ENCODE measurements at regions of chr3 and their contacts with region 1.

Region 1: GRCh38 chr3:185558395-185558794 is 6.0 kb upstream of the LIPH start:
- DNase-seq: no peak
- H3K4me3 ChIP-seq: no peak overlapping the region
- H3K4me3 Mint-ChIP-seq: peak overlapping the region in 1 of 8 donors; percentile 3
- H3K27ac ChIP-seq: no peak overlapping the region
- H3K27ac Mint-ChIP-seq: no peak overlapping the region
- H3K4me1 ChIP-seq: no peaks in the 10 kb centered on the region
- H3K4me1 Mint-ChIP-seq: peaks cover 6 to 9% (median 8%) of the 10 kb centered on the region in 4 donors
- H3K27me3 ChIP-seq: no peaks in the 10 kb centered on the region
- H3K27me3 Mint-ChIP-seq: peaks cover 3 to 10% of the 10 kb centered on the region in 2 donors

Region 2: GRCh38 chr3:184977796-184978195 is 580.6 kb before region 1 on chr3:
- CTCF ChIA-PET with region 1: no interaction called
- POLR2A ChIA-PET with region 1: no interaction called
- intact Hi-C with region 1: no loop called
- DNase-seq: no peak
- H3K4me3 ChIP-seq: no peak overlapping the region
- H3K4me3 Mint-ChIP-seq: no peak overlapping the region
- H3K27ac ChIP-seq: no peak overlapping the region
- H3K27ac Mint-ChIP-seq: no peak overlapping the region
- H3K4me1 ChIP-seq: no peaks in the 10 kb centered on the region
- H3K4me1 Mint-ChIP-seq: peaks cover 0 to 13% (median 7%) of the 10 kb centered on the region in 4 donors
- H3K27me3 ChIP-seq: no peaks in the 10 kb centered on the region
- H3K27me3 Mint-ChIP-seq: no peaks in the 10 kb centered on the region

Region 3: DNA sequence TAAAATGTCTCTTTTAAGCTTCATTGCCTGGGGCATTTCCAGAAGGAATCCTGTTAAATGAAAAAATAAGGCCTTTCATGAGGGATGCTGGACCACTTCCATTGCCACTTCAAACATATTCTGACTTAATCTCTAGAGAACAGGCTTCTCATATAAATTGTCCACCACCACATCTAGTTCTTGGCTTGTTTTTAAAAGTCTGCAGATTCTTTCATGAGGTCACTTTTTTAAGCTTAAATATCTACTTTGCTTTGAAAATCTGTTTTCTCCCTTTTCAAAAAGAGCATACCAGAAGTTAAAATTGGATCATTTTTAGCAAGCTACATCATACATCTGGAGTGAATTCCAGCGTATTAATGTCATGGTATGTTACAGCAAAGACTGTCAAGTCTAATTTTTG is 537.1 kb before region 1 on chr3:
- CTCF ChIA-PET with region 1: no interaction called
- POLR2A ChIA-PET with region 1: no interaction called
- intact Hi-C with region 1: no loop called
- DNase-seq: no peak
- H3K4me3 ChIP-seq: no peak overlapping the region
- H3K4me3 Mint-ChIP-seq: no peak overlapping the region
- H3K27ac ChIP-seq: no peak overlapping the region
- H3K27ac Mint-ChIP-seq: peak overlapping the region in 1 of 7 donors; percentile 17
- H3K4me1 ChIP-seq: no peaks in the 10 kb centered on the region
- H3K4me1 Mint-ChIP-seq: no peaks in the 10 kb centered on the region
- H3K27me3 ChIP-seq: no peaks in the 10 kb centered on the region
- H3K27me3 Mint-ChIP-seq: no peaks in the 10 kb centered on the region

Region 4: GRCh38 chr3:185353823-185354614 is 204.4 kb before region 1 on chr3:
- CTCF ChIA-PET with region 1: interaction called, 3 read pairs
- POLR2A ChIA-PET with region 1: no interaction called
- intact Hi-C with region 1: loop called (anchors 5 kb)
- DNase-seq: peak; percentile 45 to 60 (median 52)
- H3K4me3 ChIP-seq: no peak overlapping the region
- H3K4me3 Mint-ChIP-seq: no peak overlapping the region
- H3K27ac ChIP-seq: no peak overlapping the region
- H3K27ac Mint-ChIP-seq: no peak overlapping the region
- H3K4me1 ChIP-seq: no peaks in the 10 kb centered on the region
- H3K4me1 Mint-ChIP-seq: no peaks in the 10 kb centered on the region
- H3K27me3 ChIP-seq: no peaks in the 10 kb centered on the region
- H3K27me3 Mint-ChIP-seq: peaks cover 5 to 15% of the 10 kb centered on the region in 2 donors

Region 5: DNA sequence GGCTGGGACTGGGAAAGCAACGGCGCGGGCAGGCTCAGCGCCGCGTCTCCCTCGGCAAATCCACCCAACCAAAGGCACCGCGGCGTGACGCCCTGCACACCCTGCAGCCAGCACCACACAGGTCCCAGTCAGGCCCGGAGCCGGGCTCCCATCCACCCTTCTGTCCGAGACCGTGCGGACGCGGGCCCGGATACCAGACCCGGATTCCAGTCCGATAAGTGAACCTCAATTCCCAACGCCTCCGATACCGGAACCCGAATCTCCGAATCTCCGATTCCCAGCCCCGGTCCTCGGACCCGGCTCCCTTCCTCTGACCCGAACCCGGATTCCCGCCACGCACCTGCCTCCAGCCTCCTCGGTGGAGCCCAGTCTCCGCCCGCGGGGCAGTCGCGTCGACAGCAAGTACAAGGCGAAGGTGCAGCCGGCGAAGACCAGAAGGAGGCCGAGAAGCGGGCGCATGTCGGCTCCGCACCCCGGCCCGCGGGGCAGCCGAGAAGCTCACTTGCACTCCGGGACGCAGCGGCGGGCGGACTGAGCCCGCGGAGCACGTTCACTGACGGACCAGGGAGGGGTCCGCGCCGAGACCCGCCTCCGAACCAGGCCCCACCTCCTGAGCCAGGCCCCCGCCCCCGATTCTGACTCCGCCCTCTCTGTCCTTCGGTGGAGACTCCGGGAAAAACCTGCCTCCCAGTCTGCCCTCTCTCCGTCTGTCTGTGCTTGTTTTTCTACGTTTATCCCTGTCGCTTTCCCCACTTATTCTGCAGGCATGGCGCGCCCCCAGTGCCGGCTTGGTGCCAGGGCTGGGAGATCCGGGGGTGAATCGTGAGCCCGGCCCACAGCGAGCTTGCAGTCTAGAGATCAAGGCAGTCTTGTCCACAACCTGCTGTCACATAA is 59.6 kb before region 1 on chr3 and contains the start of gene TMEM41A:
- CTCF ChIA-PET with region 1: interaction called, 3 read pairs
- POLR2A ChIA-PET with region 1: no interaction called
- intact Hi-C with region 1: loop called (anchors 5 kb)
- DNase-seq: peak; percentile 81 to 88 (median 87)
- H3K4me3 ChIP-seq: peak within 1 kb of the TSS; percentile 72 to 86
- H3K4me3 Mint-ChIP-seq: peak within 1 kb of the TSS; percentile 88 to 98 (median 94)
- H3K27ac ChIP-seq: peak within 1 kb of the TSS; percentile 64
- H3K27ac Mint-ChIP-seq: peak within 1 kb of the TSS; percentile 85 to 94 (median 91)
- H3K4me1 ChIP-seq: peaks cover 23% of the 10 kb centered on the region
- H3K4me1 Mint-ChIP-seq: peaks cover 4 to 38% (median 21%) of the 10 kb centered on the region in 4 donors
- H3K27me3 ChIP-seq: no peaks in the 10 kb centered on the region
- H3K27me3 Mint-ChIP-seq: no peaks in the 10 kb centered on the region
- total RNA-seq, gene TMEM41A: 26.5 to 28.0 TPM

Region 6: DNA sequence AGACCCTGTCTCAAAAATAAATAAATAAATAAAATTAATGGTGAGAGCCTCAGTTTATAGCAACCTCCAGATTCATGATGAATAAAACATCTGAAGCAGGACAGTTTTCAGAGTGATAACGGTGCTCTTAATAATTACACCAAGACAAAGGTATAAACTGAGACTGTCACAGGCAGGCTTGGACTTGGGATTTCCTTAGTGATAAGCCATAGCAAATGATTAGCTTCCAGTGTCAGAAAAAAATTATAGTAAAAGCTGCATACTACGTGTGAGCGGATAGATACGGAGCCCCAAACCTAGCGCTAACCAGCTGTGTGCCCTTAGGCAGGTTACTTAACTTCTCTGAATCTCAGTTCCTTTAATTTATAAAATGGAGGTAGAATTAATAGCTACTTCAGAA is 27.5 kb before region 1 on chr3:
- CTCF ChIA-PET with region 1: no interaction called
- POLR2A ChIA-PET with region 1: no interaction called
- intact Hi-C with region 1: no loop called
- DNase-seq: no peak
- H3K4me3 ChIP-seq: no peak overlapping the region
- H3K4me3 Mint-ChIP-seq: no peak overlapping the region
- H3K27ac ChIP-seq: no peak overlapping the region
- H3K27ac Mint-ChIP-seq: no peak overlapping the region
- H3K4me1 ChIP-seq: no peaks in the 10 kb centered on the region
- H3K4me1 Mint-ChIP-seq: no peaks in the 10 kb centered on the region
- H3K27me3 ChIP-seq: no peaks in the 10 kb centered on the region
- H3K27me3 Mint-ChIP-seq: peaks cover 1 to 3% of the 10 kb centered on the region in 2 donors

Region 7: DNA sequence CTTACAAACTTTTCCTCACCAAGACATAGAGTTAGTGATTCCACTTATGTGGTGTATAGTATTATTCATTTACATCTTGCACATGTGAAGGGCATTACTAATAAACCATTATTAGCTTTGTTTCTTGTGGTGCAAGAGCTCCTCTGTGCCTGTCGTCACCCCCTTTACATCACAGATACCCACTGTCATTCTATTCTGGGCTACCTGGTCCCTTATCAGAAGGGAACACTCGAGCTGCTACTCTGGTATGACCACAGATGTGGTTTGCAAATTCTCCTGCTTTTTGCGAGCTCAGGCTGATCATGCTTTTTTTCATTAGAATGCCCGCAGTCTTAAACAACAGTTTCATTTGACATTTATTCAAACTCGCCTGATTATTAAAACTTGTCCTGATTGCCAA is 13.8 kb after region 1 on chr3:
- CTCF ChIA-PET with region 1: interaction called, 25 read pairs
- POLR2A ChIA-PET with region 1: no interaction called
- intact Hi-C with region 1: no loop called
- DNase-seq: no peak
- H3K4me3 ChIP-seq: no peak overlapping the region
- H3K4me3 Mint-ChIP-seq: no peak overlapping the region
- H3K27ac ChIP-seq: no peak overlapping the region
- H3K27ac Mint-ChIP-seq: no peak overlapping the region
- H3K4me1 ChIP-seq: no peaks in the 10 kb centered on the region
- H3K4me1 Mint-ChIP-seq: peaks cover 5 to 7% (median 6%) of the 10 kb centered on the region in 4 donors
- H3K27me3 ChIP-seq: no peaks in the 10 kb centered on the region
- H3K27me3 Mint-ChIP-seq: peaks cover 0 to 3% of the 10 kb centered on the region in 2 donors

Region 8: DNA sequence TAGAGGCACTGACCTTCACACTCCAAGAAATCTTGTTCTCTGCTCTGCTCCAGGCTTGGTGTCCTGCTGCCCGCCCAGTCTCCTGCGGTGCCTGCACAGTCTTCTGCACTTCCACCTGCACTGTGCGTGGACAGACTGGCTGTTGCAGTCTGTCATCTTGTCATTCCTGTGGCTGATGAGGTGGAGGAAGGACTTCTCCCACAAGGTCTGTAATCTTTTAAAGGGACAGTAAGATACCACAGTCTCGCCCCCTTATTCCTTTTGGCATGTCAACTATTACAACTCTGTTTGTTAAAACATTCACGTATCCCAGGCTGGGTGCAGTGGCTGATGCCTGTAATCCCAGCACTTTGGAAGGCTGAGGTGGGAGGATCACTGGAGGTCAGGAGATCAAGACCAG is 320.5 kb after region 1 on chr3:
- CTCF ChIA-PET with region 1: no interaction called
- POLR2A ChIA-PET with region 1: no interaction called
- intact Hi-C with region 1: no loop called
- DNase-seq: no peak
- H3K4me3 ChIP-seq: no peak overlapping the region
- H3K4me3 Mint-ChIP-seq: no peak overlapping the region
- H3K27ac ChIP-seq: no peak overlapping the region
- H3K27ac Mint-ChIP-seq: no peak overlapping the region
- H3K4me1 ChIP-seq: no peaks in the 10 kb centered on the region
- H3K4me1 Mint-ChIP-seq: no peaks in the 10 kb centered on the region
- H3K27me3 ChIP-seq: no peaks in the 10 kb centered on the region
- H3K27me3 Mint-ChIP-seq: peaks cover 12 to 15% of the 10 kb centered on the region in 2 donors